Ovary (tissue), 10 donors: ENCODE measurements at regions of chr17 and their contacts with region 1.

Region 1: GRCh38 chr17:11557727-11558452 is 40.4 kb upstream of the DNAH9 start:
- DNase-seq: peak in 1 of 5 donors; percentile 16
- H3K4me3 ChIP-seq: no peak overlapping the region
- H3K27ac ChIP-seq: no peak overlapping the region
- H3K4me1 ChIP-seq: no peaks in the 10 kb centered on the region
- H3K27me3 ChIP-seq: no peaks in the 10 kb centered on the region
- CTCF ChIP-seq: no peak
- EP300 ChIP-seq: no peak
- POLR2A ChIP-seq: no peak

Region 2: GRCh38 chr17:11651089-11651488 is 93.2 kb after region 1 on chr17:
- intact Hi-C with region 1: loop called in 1 of 4 experiments (anchors 10 kb)
- DNase-seq: no peak
- H3K4me3 ChIP-seq: no peak overlapping the region
- H3K27ac ChIP-seq: no peak overlapping the region
- H3K4me1 ChIP-seq: no peaks in the 10 kb centered on the region
- H3K27me3 ChIP-seq: no peaks in the 10 kb centered on the region
- CTCF ChIP-seq: no peak
- EP300 ChIP-seq: no peak
- POLR2A ChIP-seq: no peak

Region 3: DNA sequence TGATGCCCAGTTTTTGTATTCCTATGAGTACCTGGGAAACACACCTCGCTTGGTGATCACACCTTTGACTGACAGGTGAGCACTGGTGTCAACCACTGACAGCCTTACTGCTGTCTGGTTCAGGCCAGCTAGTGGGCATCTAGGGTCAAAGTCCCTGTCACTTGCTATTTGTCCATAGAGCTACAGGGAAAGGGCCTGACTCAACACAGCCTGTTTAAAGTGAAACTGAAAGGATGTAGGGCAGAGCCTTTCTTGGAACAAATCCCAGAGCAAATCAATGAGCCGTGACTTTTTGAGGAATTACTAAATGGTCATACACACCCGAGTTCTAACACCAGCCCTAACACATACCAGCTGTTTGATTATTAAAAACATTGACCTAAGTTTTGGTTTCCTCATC is 147.2 kb after region 1 on chr17:
- intact Hi-C with region 1: no loop called
- DNase-seq: no peak
- H3K4me3 ChIP-seq: no peak overlapping the region
- H3K27ac ChIP-seq: no peak overlapping the region
- H3K4me1 ChIP-seq: no peaks in the 10 kb centered on the region
- H3K27me3 ChIP-seq: no peaks in the 10 kb centered on the region
- CTCF ChIP-seq: no peak
- EP300 ChIP-seq: no peak
- POLR2A ChIP-seq: no peak

Region 4: GRCh38 chr17:11797803-11798202 is 239.9 kb after region 1 on chr17:
- intact Hi-C with region 1: no loop called
- DNase-seq: no peak
- H3K4me3 ChIP-seq: no peak overlapping the region
- H3K27ac ChIP-seq: no peak overlapping the region
- H3K4me1 ChIP-seq: no peaks in the 10 kb centered on the region
- H3K27me3 ChIP-seq: no peaks in the 10 kb centered on the region
- CTCF ChIP-seq: no peak
- EP300 ChIP-seq: no peak
- POLR2A ChIP-seq: no peak